ENCODE measurements at regions of chr13 and their contacts with region 1.

Region 1: DNA sequence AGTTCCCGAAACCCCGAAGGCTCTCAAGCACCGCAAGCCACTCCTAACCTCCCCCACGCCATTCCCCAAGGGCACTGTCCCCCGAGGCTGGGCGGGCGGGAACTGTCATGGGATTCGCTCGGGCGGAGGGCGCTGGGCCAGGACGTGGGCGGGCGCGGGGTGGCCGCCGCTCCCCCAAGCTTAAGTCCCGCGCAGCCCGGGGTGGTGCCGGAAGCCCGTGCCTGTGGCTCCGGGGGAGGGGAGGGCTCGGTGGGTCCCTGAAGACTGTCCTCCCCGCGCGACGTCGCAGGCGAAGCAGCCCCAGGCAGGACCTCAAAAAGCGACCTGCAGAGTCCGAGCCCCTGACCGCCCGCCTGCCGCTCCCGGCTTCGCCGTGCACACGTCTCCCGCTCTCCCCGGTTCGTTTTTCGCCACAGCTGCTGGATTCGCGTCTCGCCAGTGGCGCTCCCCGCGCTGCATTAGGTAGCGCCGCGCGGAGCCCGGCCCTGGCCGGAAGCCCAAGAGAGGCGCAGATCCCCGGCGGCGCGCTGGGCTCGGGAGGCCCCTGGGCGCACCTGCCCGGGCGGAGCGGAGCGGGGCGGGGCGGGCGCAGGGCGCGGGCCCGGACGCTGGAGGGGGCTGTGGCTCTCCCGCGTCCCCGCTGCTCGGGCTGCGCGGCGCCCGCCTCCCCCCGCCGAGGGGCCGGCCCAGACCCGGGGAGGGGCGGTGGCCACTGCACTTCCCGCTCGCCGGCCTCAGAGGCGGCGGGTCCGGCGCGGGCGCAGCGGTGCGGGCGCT is at the start of gene FARP1:
- DNase-seq: peak; percentile 86
- H3K4me3 ChIP-seq: peak within 1 kb of the TSS; percentile 51 to 94 (median 84)
- H3K27ac ChIP-seq: peak within 1 kb of the TSS; percentile 58 to 87 (median 80)
- H3K4me1 ChIP-seq: peaks cover 0 to 40% (median 27%) of the 10 kb centered on the region in 4 donors
- H3K27me3 ChIP-seq: no peaks in the 10 kb centered on the region
- CTCF ChIP-seq: peak in 1 of 4 experiments; percentile 36
- EP300 ChIP-seq: no peak
- POLR2A ChIP-seq: no peak
- total RNA-seq, gene FARP1: 32.9 to 96.4 (median 47.5) TPM

Region 2: GRCh38 chr13:97921176-97921816 is 221.3 kb before region 1 on chr13:
- intact Hi-C with region 1: no loop called
- DNase-seq: no peak
- H3K4me3 ChIP-seq: no peak overlapping the region
- H3K27ac ChIP-seq: no peak overlapping the region
- H3K4me1 ChIP-seq: no peaks in the 10 kb centered on the region
- H3K27me3 ChIP-seq: no peaks in the 10 kb centered on the region
- CTCF ChIP-seq: no peak
- EP300 ChIP-seq: no peak
- POLR2A ChIP-seq: no peak

Region 3: GRCh38 chr13:97975848-97976609 is 166.5 kb before region 1 on chr13:
- intact Hi-C with region 1: loop called (anchors 5 kb)
- DNase-seq: peak; percentile 94
- H3K4me3 ChIP-seq: peak overlapping the region; percentile 80 to 96 (median 86)
- H3K27ac ChIP-seq: peak overlapping the region; percentile 95 to 98 (median 97)
- H3K4me1 ChIP-seq: peaks cover 0 to 38% (median 30%) of the 10 kb centered on the region in 4 donors
- H3K27me3 ChIP-seq: no peaks in the 10 kb centered on the region
- CTCF ChIP-seq: no peak
- EP300 ChIP-seq: no peak
- POLR2A ChIP-seq: peak in 1 of 2 donors; percentile 28

Region 4: GRCh38 chr13:98349731-98350305 is 207.2 kb after region 1 on chr13:
- intact Hi-C with region 1: loop called (anchors 2 kb)
- DNase-seq: no peak
- H3K4me3 ChIP-seq: no peak overlapping the region
- H3K27ac ChIP-seq: no peak overlapping the region
- H3K4me1 ChIP-seq: peaks cover 0 to 16% (median 9%) of the 10 kb centered on the region in 4 donors
- H3K27me3 ChIP-seq: no peaks in the 10 kb centered on the region
- CTCF ChIP-seq: no peak
- EP300 ChIP-seq: no peak
- POLR2A ChIP-seq: no peak

Region 5: GRCh38 chr13:98576963-98577822 is 434.6 kb after region 1 on chr13 and contains the start of gene STK24:
- intact Hi-C with region 1: loop called (anchors 2 kb)
- DNase-seq: peak; percentile 86
- H3K4me3 ChIP-seq: peak within 1 kb of the TSS; percentile 88 to 99 (median 92)
- H3K27ac ChIP-seq: peak within 1 kb of the TSS; percentile 98 to 100 (median 99)
- H3K4me1 ChIP-seq: peaks cover 0 to 50% (median 46%) of the 10 kb centered on the region in 4 donors
- H3K27me3 ChIP-seq: no peaks in the 10 kb centered on the region
- CTCF ChIP-seq: no peak
- EP300 ChIP-seq: no peak
- POLR2A ChIP-seq: no peak
- total RNA-seq, gene STK24: 59.7 to 78.9 (median 64.4) TPM

Measured in sigmoid colon (tissue), 7 donors.